ENCODE measurements at regions of chr5 and their contacts with region 1.

Region 1: GRCh38 chr5:32585446-32586275 is at the start of gene SUB1:
- DNase-seq: peak; percentile 92 to 93 (median 92)
- H3K4me3 ChIP-seq: peak within 1 kb of the TSS; percentile 61 to 97 (median 87)
- H3K4me3 Mint-ChIP-seq: peak within 1 kb of the TSS; percentile 99
- H3K27ac ChIP-seq: peak within 1 kb of the TSS; percentile 98
- H3K27ac Mint-ChIP-seq: peak within 1 kb of the TSS; percentile 91 to 99 (median 96)
- H3K4me1 ChIP-seq: peaks cover 60 to 67% of the 10 kb centered on the region in 2 donors
- H3K4me1 Mint-ChIP-seq: peaks cover 64% of the 10 kb centered on the region
- H3K27me3 ChIP-seq: no peaks in the 10 kb centered on the region
- H3K27me3 Mint-ChIP-seq: peaks cover 0 to 2% (median 0%) of the 10 kb centered on the region in 3 donors
- CTCF ChIP-seq: no peak
- polyA plus RNA-seq, gene SUB1: 74.3 to 454 (median 399) TPM

Region 2: GRCh38 chr5:32174011-32174870 is 411.4 kb before region 1 on chr5 and contains the start of gene GOLPH3:
- intact Hi-C with region 1: loop called (anchors 10 kb)
- DNase-seq: peak; percentile 87 to 89 (median 88)
- H3K4me3 ChIP-seq: peak within 1 kb of the TSS; percentile 65 to 95 (median 70)
- H3K4me3 Mint-ChIP-seq: peak within 1 kb of the TSS; percentile 98 to 100
- H3K27ac ChIP-seq: peak within 1 kb of the TSS; percentile 77 to 98
- H3K27ac Mint-ChIP-seq: peak within 1 kb of the TSS; percentile 95 to 99 (median 97)
- H3K4me1 ChIP-seq: peaks cover 35 to 43% of the 10 kb centered on the region in 2 donors
- H3K4me1 Mint-ChIP-seq: peaks cover 40% of the 10 kb centered on the region
- H3K27me3 ChIP-seq: no peaks in the 10 kb centered on the region
- H3K27me3 Mint-ChIP-seq: peaks cover 0 to 3% (median 2%) of the 10 kb centered on the region in 3 donors
- CTCF ChIP-seq: no peak
- polyA plus RNA-seq, gene GOLPH3: 25.1 to 108 (median 105) TPM

Region 3: DNA sequence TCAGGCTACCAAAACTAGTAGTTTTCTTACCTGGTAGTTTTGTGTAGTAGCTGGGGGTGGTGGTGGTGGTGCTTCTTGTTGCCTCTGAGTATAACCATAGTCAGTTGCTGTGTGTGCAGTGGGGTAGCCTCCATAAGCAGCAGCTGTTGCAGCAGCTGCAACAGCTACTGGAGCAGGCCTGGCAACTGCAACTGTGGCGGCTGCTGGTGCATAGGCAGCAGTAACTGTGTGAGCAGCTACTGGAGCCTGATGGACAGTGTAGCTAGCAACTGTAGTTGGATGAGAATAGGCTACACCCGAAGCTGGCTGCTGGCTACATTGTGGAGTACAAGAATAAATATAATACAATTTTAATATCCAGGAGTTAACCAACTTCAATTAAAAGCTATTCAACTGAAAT is 165.9 kb before region 1 on chr5:
- intact Hi-C with region 1: loop called in 1 of 2 experiments (anchors 10 kb)
- DNase-seq: no peak
- H3K4me3 ChIP-seq: no peak overlapping the region
- H3K4me3 Mint-ChIP-seq: no peak overlapping the region
- H3K27ac ChIP-seq: no peak overlapping the region
- H3K27ac Mint-ChIP-seq: no peak overlapping the region
- H3K4me1 ChIP-seq: no peaks in the 10 kb centered on the region
- H3K4me1 Mint-ChIP-seq: peaks cover under 1% of the 10 kb centered on the region
- H3K27me3 ChIP-seq: no peaks in the 10 kb centered on the region
- H3K27me3 Mint-ChIP-seq: no peaks in the 10 kb centered on the region
- CTCF ChIP-seq: no peak

Region 4: GRCh38 chr5:32489791-32490582 is 95.7 kb before region 1 on chr5:
- intact Hi-C with region 1: loop called in 1 of 2 experiments (anchors 2 kb)
- DNase-seq: peak; percentile 56 to 70 (median 61)
- H3K4me3 ChIP-seq: no peak overlapping the region
- H3K4me3 Mint-ChIP-seq: no peak overlapping the region
- H3K27ac ChIP-seq: no peak overlapping the region
- H3K27ac Mint-ChIP-seq: no peak overlapping the region
- H3K4me1 ChIP-seq: no peaks in the 10 kb centered on the region
- H3K4me1 Mint-ChIP-seq: no peaks in the 10 kb centered on the region
- H3K27me3 ChIP-seq: no peaks in the 10 kb centered on the region
- H3K27me3 Mint-ChIP-seq: peaks cover 0 to 3% (median 2%) of the 10 kb centered on the region in 3 donors
- CTCF ChIP-seq: peak; percentile 90

Region 5: DNA sequence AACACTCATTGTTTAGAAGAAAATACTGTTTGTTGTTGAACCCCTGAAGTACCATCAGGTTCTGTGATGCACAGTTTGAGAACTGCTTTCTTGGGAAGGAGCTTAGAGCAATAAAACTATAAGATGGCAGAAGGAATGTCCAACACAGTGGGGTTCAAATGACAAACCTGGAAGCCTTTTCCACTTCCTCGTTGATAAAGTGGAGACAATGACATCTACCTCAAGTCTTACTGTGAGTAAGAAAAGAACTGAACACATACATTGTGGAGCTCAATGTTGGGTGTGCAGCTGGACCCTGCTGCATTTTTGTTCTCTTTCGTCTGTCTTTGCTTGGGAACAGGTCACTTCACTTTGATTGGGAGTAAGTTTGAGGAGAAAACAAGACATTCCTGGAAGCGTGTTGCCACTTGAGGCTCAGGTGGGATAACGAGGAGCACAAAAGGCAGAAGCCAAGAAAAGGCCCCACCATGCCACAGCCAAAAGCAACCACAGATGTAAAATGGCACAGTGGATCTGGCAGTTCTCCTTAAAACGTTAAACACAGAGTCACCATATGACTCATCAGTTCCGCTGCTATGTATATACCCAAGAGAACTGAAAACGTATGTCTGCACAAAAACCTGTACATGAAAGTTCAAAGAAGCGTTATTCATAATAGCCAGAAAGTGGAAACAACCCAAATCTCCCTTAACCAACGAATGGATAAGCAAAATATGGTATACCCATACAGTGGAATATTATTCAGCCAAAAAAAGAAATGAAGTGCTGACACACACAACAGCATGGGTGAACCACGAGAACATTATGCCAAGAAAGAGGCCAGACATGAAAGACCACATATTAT is 43.2 kb before region 1 on chr5:
- intact Hi-C with region 1: loop called (anchors 5 kb)
- DNase-seq: peak; percentile 52 to 80 (median 71)
- H3K4me3 ChIP-seq: no peak overlapping the region
- H3K4me3 Mint-ChIP-seq: peak overlapping the region in 1 of 2 donors; percentile 46
- H3K27ac ChIP-seq: no peak overlapping the region
- H3K27ac Mint-ChIP-seq: peak overlapping the region in 6 of 7 donors; percentile 38 to 92 (median 64)
- H3K4me1 ChIP-seq: peaks cover 55 to 58% of the 10 kb centered on the region in 2 donors
- H3K4me1 Mint-ChIP-seq: peaks cover 49% of the 10 kb centered on the region
- H3K27me3 ChIP-seq: no peaks in the 10 kb centered on the region
- H3K27me3 Mint-ChIP-seq: peaks cover 0 to 3% (median 1%) of the 10 kb centered on the region in 3 donors
- CTCF ChIP-seq: no peak